HepG2 (cell line): ENCODE measurements at regions of chr2 and their contacts with region 1.

Region 1: DNA sequence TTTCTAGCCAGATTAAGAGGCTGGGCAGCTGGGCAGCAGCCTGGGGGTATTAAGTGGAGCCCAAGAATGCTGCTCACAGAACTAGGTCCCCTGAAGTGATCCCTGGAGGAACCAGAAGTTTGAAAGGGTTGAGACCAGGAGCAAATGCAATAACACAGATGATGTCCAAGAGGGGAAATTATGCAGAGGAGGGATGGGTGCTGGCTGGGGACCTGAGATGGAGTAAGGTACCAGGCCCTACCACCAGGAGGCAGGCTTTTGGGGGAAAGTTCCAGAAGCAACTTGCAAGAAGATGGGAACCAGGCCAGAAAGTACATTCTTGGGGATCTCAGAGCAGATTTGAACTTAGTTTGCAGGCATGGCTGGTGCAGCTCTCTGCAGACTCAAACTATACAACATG is 175.1 kb downstream of the NCK2 start:
- DNase-seq: peak; percentile 35
- ATAC-seq: peak; percentile 32
- H3K4me3 ChIP-seq: peak overlapping the region in 1 of 3 experiments; percentile 39; a peak in 1 of 6 replicates
- H3K27ac ChIP-seq: peak overlapping the region; percentile 78
- H3K4me1 ChIP-seq: peaks cover 52% of the 10 kb centered on the region
- H3K27me3 ChIP-seq: no peaks in the 10 kb centered on the region
- CTCF ChIP-seq: peak; percentile 70
- EP300 ChIP-seq: no peak
- POLR2A ChIP-seq: no peak
- RAD21 ChIP-seq: no peak

Region 2: DNA sequence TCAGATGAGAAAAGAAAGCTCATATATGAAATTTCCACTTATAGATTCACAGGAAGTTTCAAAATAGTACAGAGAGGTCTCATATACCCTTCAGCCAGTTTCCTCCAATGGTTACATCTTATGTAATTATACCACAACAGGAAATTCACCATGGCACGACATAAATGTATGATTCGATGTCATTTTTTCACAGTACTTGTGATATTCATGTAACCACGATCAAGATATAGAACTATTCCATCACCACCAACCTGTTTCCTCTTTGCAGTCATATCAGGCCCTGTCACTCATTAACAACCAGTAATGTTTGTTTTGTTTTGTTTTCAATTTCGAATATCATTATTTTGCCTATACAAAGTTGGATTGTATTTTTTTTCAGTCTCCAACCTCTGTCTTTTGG is 1380.2 kb before region 1 on chr2:
- CTCF ChIA-PET with region 1: no interaction called
- POLR2A ChIA-PET with region 1: no interaction called
- in situ Hi-C with region 1: no loop called
- intact Hi-C with region 1: no loop called
- DNase-seq: no peak
- ATAC-seq: no peak
- H3K4me3 ChIP-seq: no peak overlapping the region
- H3K27ac ChIP-seq: no peak overlapping the region
- H3K4me1 ChIP-seq: no peaks in the 10 kb centered on the region
- H3K27me3 ChIP-seq: peaks cover 0 to 10% of the 10 kb centered on the region in 2 experiments; a peak in 1 of 5 replicates
- CTCF ChIP-seq: no peak
- EP300 ChIP-seq: no peak
- POLR2A ChIP-seq: no peak
- RAD21 ChIP-seq: no peak

Region 3: DNA sequence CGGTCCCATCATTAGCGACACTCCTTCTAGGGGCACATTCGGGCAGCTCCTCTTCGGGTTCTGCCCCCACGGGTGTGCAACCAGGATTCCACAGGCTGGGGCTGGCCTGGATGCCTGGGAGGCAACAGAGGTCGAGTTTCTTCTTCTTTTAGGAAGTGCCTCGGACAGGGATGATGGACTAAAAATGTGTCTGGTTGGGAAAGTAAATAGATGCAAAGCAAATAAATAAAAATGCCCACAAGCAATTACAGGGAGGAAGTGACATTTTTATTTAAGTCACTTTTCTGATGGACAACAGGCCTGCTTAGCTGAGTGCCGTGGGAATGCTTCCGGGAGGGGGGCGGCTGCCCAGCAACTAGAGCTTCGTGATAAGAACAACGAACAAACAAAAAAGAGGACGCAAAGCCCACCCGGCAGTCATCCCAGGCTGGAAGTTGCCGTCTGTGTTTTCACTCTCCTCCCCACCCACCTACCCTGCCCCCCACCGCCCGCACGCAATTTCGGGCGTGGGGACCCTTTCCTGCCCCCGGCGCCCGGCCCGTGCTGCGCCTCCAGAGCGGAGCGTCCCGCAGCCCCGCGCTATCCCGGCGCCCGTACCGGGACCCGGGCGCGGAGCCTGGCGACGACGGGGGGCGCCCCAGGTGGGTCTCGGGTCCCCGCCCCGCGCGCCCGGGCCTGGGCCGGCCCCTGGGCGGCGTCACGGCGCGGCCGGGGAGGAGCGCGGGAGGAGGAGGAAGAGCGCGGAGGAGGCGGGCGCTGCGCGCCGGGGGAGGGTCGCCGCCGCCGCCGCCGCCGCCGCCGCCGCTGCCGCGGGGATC is 175.5 kb before region 1 on chr2:
- CTCF ChIA-PET with region 1: no interaction called
- POLR2A ChIA-PET with region 1: no interaction called
- in situ Hi-C with region 1: no loop called
- intact Hi-C with region 1: loop called (anchors 5 kb)
- DNase-seq: peak; percentile 19
- ATAC-seq: peak; percentile 76
- H3K4me3 ChIP-seq: peak overlapping the region; percentile 63 to 83 (median 72)
- H3K27ac ChIP-seq: no peak overlapping the region
- H3K4me1 ChIP-seq: peaks cover 38% of the 10 kb centered on the region
- H3K27me3 ChIP-seq: peaks cover 0 to 22% of the 10 kb centered on the region in 2 experiments; a peak in 3 of 5 replicates
- CTCF ChIP-seq: peak; percentile 3; the same call in 1 of the 2 replicates
- EP300 ChIP-seq: no peak
- POLR2A ChIP-seq: no peak
- RAD21 ChIP-seq: no peak

Region 4: DNA sequence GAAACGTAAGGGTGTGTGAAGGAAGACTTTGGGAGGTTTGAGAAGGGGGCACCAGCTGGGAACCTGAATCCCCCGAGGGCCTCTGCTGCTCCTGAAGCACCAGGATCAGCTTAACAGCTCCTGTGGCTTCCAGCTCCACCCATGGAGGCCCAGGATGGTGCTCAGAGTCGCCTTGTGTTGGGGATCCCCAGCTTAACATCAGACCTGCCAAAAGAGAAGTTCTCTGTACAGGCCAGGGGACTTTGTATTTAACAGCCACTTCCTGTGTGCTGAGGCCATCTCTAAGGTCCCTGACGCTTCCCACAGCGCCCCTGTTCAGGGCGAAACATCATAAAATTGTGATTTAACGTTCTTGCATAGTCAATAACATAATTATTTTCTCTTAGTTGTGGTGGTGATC is 97.6 kb before region 1 on chr2:
- CTCF ChIA-PET with region 1: no interaction called
- POLR2A ChIA-PET with region 1: interaction called, 4 read pairs
- in situ Hi-C with region 1: no loop called
- intact Hi-C with region 1: loop called (anchors 5 kb)
- DNase-seq: peak; percentile 16
- ATAC-seq: peak; percentile 66
- H3K4me3 ChIP-seq: peak overlapping the region in 1 of 3 experiments; percentile 11; a peak in 1 of 6 replicates
- H3K27ac ChIP-seq: peak overlapping the region; percentile 68
- H3K4me1 ChIP-seq: peaks cover 42% of the 10 kb centered on the region
- H3K27me3 ChIP-seq: no peaks in the 10 kb centered on the region
- CTCF ChIP-seq: 0 out of 2 replicates have a peak, but pooled peaks have one; percentile 9
- EP300 ChIP-seq: no peak
- POLR2A ChIP-seq: no peak
- RAD21 ChIP-seq: no peak

Region 5: DNA sequence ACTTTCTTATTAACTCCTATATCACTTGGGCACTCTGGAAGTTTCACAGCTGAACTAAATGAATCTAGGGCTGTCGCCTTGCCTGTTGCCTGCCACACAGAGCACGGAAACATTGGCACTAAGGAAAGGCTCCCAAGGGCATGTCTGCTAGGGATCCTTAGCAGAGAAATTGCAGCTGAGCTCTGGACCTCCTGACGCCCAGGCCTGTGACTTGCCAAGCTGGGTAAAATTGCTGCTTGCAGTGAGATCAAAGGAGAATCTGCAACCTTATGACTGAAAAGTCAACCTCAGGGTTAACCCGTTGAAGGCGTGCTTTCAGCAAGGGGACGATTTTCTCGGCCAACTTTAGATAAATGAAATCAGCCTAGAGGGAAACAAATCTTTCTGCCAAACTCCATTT is 14.6 kb after region 1 on chr2:
- CTCF ChIA-PET with region 1: no interaction called
- POLR2A ChIA-PET with region 1: interaction called, 10 read pairs
- in situ Hi-C with region 1: no loop called
- intact Hi-C with region 1: loop called (anchors 1 kb)
- DNase-seq: peak; percentile 66
- ATAC-seq: peak; percentile 78
- H3K4me3 ChIP-seq: no peak overlapping the region
- H3K27ac ChIP-seq: peak overlapping the region; percentile 18
- H3K4me1 ChIP-seq: peaks cover 46% of the 10 kb centered on the region
- H3K27me3 ChIP-seq: no peaks in the 10 kb centered on the region
- CTCF ChIP-seq: no peak
- EP300 ChIP-seq: peak in 1 of 2 experiments; percentile 69; a peak in 2 of 4 replicates
- POLR2A ChIP-seq: no peak
- RAD21 ChIP-seq: no peak

Region 6: GRCh38 chr2:106030287-106031268 is 110.8 kb after region 1 on chr2:
- CTCF ChIA-PET with region 1: no interaction called
- POLR2A ChIA-PET with region 1: interaction called, 5 read pairs
- in situ Hi-C with region 1: no loop called
- intact Hi-C with region 1: loop called (anchors 5 kb)
- DNase-seq: peak; percentile 90
- ATAC-seq: peak; percentile 91
- H3K4me3 ChIP-seq: peak overlapping the region in 2 of 3 experiments; percentile 6 to 47; a peak in 3 of 6 replicates
- H3K27ac ChIP-seq: no peak overlapping the region
- H3K4me1 ChIP-seq: peaks cover 36% of the 10 kb centered on the region
- H3K27me3 ChIP-seq: peaks cover 1 to 7% of the 10 kb centered on the region in 2 experiments; a peak in 2 of 5 replicates
- CTCF ChIP-seq: peak; percentile 13; the same call in 1 of the 2 replicates
- EP300 ChIP-seq: peak; percentile 94 to 99
- POLR2A ChIP-seq: no peak
- RAD21 ChIP-seq: peak; percentile 32; the same call in 1 of the 2 replicates

Region 7: GRCh38 chr2:106332054-106332453 is 412.2 kb after region 1 on chr2:
- CTCF ChIA-PET with region 1: no interaction called
- POLR2A ChIA-PET with region 1: no interaction called
- in situ Hi-C with region 1: no loop called
- intact Hi-C with region 1: no loop called
- DNase-seq: peak; percentile 66
- ATAC-seq: peak; percentile 89
- H3K4me3 ChIP-seq: no peak overlapping the region
- H3K27ac ChIP-seq: no peak overlapping the region
- H3K4me1 ChIP-seq: peaks cover 47% of the 10 kb centered on the region
- H3K27me3 ChIP-seq: peaks cover 0 to 9% of the 10 kb centered on the region in 2 experiments; a peak in 2 of 5 replicates
- CTCF ChIP-seq: 0 out of 2 replicates have a peak, but pooled peaks have one; percentile 11
- EP300 ChIP-seq: peak in 1 of 2 experiments; percentile 38; a peak in 1 of 4 replicates
- POLR2A ChIP-seq: no peak
- RAD21 ChIP-seq: no peak